Mammary epithelial cell (primary cell): ENCODE measurements at regions of chr10 and their contacts with region 1.

Region 1: GRCh38 chr10:338518-339311 is 203.5 kb downstream of the ZMYND11 start:
- DNase-seq: no peak
- H3K4me3 ChIP-seq: no peak overlapping the region
- H3K27ac ChIP-seq: no peak overlapping the region
- H3K4me1 ChIP-seq: no peaks in the 10 kb centered on the region
- H3K27me3 ChIP-seq: no peaks in the 10 kb centered on the region
- CTCF ChIP-seq: no peak

Region 2: DNA sequence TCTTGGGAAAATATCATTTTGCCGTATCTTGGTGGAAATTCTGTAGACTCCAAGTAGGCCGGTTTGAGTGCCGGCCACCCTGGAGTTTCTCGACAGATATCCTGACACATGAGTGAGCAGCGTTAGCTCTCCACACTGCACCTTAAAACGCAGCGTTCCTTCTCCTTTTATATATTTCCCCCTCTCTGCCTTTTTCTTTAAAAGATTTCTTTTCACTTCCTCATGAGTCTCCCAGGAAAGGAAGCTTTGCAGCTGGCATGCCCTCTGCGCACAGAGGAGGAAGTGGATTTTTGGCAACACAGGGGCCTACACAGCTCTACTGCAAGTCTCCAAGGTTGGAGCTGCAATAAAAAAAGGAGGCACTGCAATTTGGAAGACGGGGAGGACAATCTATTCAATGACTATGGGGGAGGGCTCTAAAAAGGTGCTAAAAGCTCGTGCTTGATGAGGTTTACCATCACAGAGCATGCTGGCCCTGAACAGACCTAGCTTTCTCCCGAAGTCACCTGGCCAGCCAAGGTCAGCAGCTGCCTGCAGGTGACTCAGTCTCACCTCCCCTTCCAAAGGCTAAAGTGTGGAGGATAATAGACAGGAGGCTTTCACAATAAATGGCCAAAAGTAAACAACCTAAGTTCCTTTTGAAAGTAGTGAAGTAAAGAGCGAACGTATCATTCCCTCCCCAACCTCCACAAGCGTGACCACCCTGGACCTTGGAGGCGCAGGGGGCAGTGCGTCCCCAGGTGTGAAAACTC is 49.4 kb after region 1 on chr10:
- CTCF ChIA-PET with region 1: no interaction called
- dilution Hi-C with region 1: loop called (anchors 5 kb)
- in situ Hi-C with region 1: no loop called
- intact Hi-C with region 1: no loop called
- DNase-seq: no peak
- H3K4me3 ChIP-seq: no peak overlapping the region
- H3K27ac ChIP-seq: no peak overlapping the region
- H3K4me1 ChIP-seq: no peaks in the 10 kb centered on the region
- H3K27me3 ChIP-seq: no peaks in the 10 kb centered on the region
- CTCF ChIP-seq: no peak

Region 3: DNA sequence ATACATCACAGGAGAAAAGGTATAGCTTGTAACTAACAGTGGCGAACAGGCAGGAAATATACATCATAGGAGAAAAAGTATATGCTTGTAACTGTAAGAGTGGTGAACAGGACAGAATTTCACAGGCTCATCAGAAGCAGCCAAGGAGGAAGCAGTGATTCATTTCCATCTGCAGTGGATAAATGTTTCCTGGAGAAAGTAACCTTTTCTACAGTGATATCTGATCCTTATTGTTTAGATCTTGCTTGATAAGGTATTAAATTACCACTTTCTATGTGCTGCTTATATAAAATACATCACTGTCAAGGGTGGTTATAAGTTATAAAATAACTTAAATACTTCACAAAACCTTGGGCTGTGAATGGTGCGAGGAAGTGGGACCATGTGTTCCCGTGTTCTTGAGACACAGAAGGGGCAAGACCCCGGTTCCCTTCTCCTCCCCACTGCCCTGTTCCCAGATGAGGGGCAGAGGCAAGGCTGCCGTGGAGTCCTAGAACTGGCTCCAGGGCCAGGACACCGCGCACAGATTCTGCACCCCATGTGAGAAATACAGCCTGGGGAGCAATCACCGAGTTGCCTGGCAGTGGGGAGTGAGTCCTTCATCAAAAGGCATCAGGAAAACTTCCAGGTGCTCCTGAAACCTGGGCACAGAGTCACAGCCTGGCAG is 215.6 kb after region 1 on chr10:
- CTCF ChIA-PET with region 1: no interaction called
- dilution Hi-C with region 1: no loop called
- in situ Hi-C with region 1: no loop called
- intact Hi-C with region 1: no loop called
- DNase-seq: no peak
- H3K4me3 ChIP-seq: no peak overlapping the region
- H3K27ac ChIP-seq: no peak overlapping the region
- H3K4me1 ChIP-seq: no peaks in the 10 kb centered on the region
- H3K27me3 ChIP-seq: no peaks in the 10 kb centered on the region
- CTCF ChIP-seq: no peak

Region 4: DNA sequence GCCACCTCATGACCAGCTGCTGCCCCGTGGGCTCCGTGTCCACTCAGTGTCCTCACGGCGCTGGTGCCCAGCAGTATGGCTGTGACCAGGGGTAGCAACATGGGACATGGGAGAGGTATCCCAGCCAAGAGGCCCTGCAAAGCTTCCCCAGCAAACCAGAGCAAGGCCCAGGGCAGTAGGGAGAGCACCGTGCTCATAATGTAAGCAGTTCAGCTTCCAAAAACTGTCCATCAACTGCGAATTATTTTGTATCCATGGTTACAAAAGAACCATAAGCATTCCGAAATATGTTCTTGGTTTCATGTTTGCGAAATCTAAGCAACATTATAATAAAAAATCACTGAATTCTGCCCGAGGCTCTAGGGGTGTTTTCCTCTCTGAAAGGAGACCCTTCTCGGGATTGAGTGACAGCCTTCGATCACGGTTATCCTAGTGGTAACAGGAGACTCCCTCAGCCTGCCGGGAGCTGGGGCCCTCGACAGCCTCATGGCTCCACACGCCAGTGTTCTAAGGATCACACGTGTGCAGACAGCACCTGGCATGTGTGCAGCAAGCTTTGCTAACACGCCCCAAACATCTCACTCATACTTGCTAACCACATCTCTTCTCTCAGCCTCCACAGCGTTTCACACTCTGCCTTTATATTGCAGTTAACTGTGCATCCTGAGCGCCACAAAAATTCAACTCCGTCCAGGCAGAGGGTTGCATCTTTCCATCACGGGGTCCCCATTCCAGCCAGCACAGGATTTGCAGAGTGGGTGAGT is 233.2 kb after region 1 on chr10:
- CTCF ChIA-PET with region 1: no interaction called
- dilution Hi-C with region 1: no loop called
- in situ Hi-C with region 1: no loop called
- intact Hi-C with region 1: no loop called
- DNase-seq: no peak
- H3K4me3 ChIP-seq: no peak overlapping the region
- H3K27ac ChIP-seq: no peak overlapping the region
- H3K4me1 ChIP-seq: no peaks in the 10 kb centered on the region
- H3K27me3 ChIP-seq: no peaks in the 10 kb centered on the region
- CTCF ChIP-seq: no peak